CD8-positive, alpha-beta T cell (primary cell): ENCODE measurements at regions of chr12 and their contacts with region 1.

Region 1: GRCh38 chr12:131959641-131960589 is 10.2 kb downstream of the EP400 start:
- DNase-seq: no peak
- ATAC-seq: no peak
- H3K4me3 ChIP-seq: no peak overlapping the region
- H3K4me3 Mint-ChIP-seq: no peak overlapping the region
- H3K27ac ChIP-seq: no peak overlapping the region
- H3K27ac Mint-ChIP-seq: peak overlapping the region; percentile 22
- H3K4me1 ChIP-seq: peaks cover 33% of the 10 kb centered on the region
- H3K4me1 Mint-ChIP-seq: peaks cover 68% of the 10 kb centered on the region
- H3K27me3 ChIP-seq: no peaks in the 10 kb centered on the region
- H3K27me3 Mint-ChIP-seq: no peaks in the 10 kb centered on the region
- CTCF ChIP-seq: no peak

Region 2: GRCh38 chr12:131229426-131230339 is 730.2 kb before region 1 on chr12:
- CTCF ChIA-PET with region 1: no interaction called
- POLR2A ChIA-PET with region 1: no interaction called
- intact Hi-C with region 1: no loop called
- DNase-seq: no peak
- ATAC-seq: no peak
- H3K4me3 ChIP-seq: no peak overlapping the region
- H3K4me3 Mint-ChIP-seq: no peak overlapping the region
- H3K27ac ChIP-seq: no peak overlapping the region
- H3K27ac Mint-ChIP-seq: no peak overlapping the region
- H3K4me1 ChIP-seq: no peaks in the 10 kb centered on the region
- H3K4me1 Mint-ChIP-seq: peaks cover 2% of the 10 kb centered on the region
- H3K27me3 ChIP-seq: no peaks in the 10 kb centered on the region
- H3K27me3 Mint-ChIP-seq: peaks cover 19% of the 10 kb centered on the region
- CTCF ChIP-seq: no peak

Region 3: GRCh38 chr12:131882779-131883520 is 77.0 kb before region 1 on chr12:
- CTCF ChIA-PET with region 1: no interaction called
- POLR2A ChIA-PET with region 1: no interaction called
- intact Hi-C with region 1: loop called in 1 of 2 experiments (anchors 5 kb)
- DNase-seq: no peak
- ATAC-seq: no peak
- H3K4me3 ChIP-seq: no peak overlapping the region
- H3K4me3 Mint-ChIP-seq: no peak overlapping the region
- H3K27ac ChIP-seq: no peak overlapping the region
- H3K27ac Mint-ChIP-seq: no peak overlapping the region
- H3K4me1 ChIP-seq: no peaks in the 10 kb centered on the region
- H3K4me1 Mint-ChIP-seq: no peaks in the 10 kb centered on the region
- H3K27me3 ChIP-seq: no peaks in the 10 kb centered on the region
- H3K27me3 Mint-ChIP-seq: no peaks in the 10 kb centered on the region
- CTCF ChIP-seq: no peak

Region 4: GRCh38 chr12:131928711-131929580 is 31.0 kb before region 1 on chr12 and contains the start of gene PUS1:
- CTCF ChIA-PET with region 1: no interaction called
- POLR2A ChIA-PET with region 1: no interaction called
- intact Hi-C with region 1: loop called in 1 of 2 experiments (anchors 1 kb)
- DNase-seq: peak; percentile 87 to 97 (median 93)
- ATAC-seq: peak; percentile 88
- H3K4me3 ChIP-seq: peak within 1 kb of the TSS; percentile 90 to 96
- H3K4me3 Mint-ChIP-seq: peak within 1 kb of the TSS; percentile 91
- H3K27ac ChIP-seq: peak within 1 kb of the TSS; percentile 63 to 73
- H3K27ac Mint-ChIP-seq: peak within 1 kb of the TSS; percentile 87
- H3K4me1 ChIP-seq: peaks cover 11% of the 10 kb centered on the region
- H3K4me1 Mint-ChIP-seq: peaks cover 18% of the 10 kb centered on the region
- H3K27me3 ChIP-seq: no peaks in the 10 kb centered on the region
- H3K27me3 Mint-ChIP-seq: no peaks in the 10 kb centered on the region
- CTCF ChIP-seq: no peak
- total RNA-seq, gene PUS1: 17.5 to 17.9 TPM